ENCODE measurements at regions of chr7 and their contacts with region 1.

Region 1: GRCh38 chr7:13945670-13946069 is 43.8 kb downstream of the ETV1 start:
- DNase-seq: no peak
- ATAC-seq: no peak

Region 2: GRCh38 chr7:13963925-13964324 is 18.3 kb after region 1 on chr7:
- intact Hi-C with region 1: loop called (anchors 2 kb)
- DNase-seq: no peak
- ATAC-seq: no peak